Ascending aorta (tissue), 2 donors: ENCODE measurements at regions of chr6 and their contacts with region 1.

Region 1: GRCh38 chr6:11414176-11414963 is 123.2 kb upstream of the TMEM170B start:
- DNase-seq: no peak
- H3K4me3 ChIP-seq: no peak overlapping the region
- H3K27ac ChIP-seq: peak overlapping the region; percentile 85 to 93
- H3K4me1 ChIP-seq: peaks cover 7 to 20% of the 10 kb centered on the region in 2 donors
- H3K27me3 ChIP-seq: no peaks in the 10 kb centered on the region
- CTCF ChIP-seq: no peak

Region 2: DNA sequence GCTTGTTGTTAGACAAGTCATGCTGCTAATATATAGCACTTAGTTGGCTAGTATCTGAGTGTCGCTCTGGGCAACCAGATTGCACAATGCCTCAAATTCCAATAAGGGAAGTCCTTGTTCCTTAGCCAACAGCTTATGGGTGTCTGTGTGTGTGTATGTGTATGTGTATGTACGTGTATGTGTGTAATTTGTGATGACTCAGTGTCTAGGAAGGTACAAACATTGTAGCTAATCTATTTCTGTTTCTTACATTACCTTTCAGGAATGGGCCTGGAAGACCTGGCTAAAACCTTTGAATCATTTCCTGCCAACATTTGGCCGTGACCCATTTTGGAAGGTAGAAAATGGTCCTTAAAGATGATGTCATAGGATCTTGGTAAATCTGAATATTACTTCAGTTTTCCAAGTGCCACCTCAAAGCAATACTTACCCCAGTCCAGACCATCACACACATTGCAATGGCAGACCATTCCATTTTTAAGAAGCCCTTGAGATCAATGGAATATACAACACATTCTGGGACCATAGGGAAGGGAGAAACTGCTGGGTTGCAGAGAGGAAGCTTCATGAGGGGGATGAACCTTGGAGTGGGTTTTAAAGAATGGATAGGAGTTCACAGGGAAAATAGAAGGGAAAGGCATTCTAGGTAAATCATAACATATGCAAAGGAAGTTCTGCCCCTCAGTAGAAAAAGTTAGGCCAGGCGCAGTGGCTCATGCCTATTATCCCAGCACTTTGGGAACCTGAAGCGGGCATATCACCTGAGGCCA is 207.0 kb before region 1 on chr6:
- intact Hi-C with region 1: loop called (anchors 5 kb)
- DNase-seq: peak; percentile 67 to 94
- H3K4me3 ChIP-seq: peak overlapping the region; percentile 11 to 25
- H3K27ac ChIP-seq: peak overlapping the region; percentile 91 to 94
- H3K4me1 ChIP-seq: peaks cover 43 to 89% of the 10 kb centered on the region in 2 donors
- H3K27me3 ChIP-seq: no peaks in the 10 kb centered on the region
- CTCF ChIP-seq: no peak

Region 3: GRCh38 chr6:11353921-11354389 is 60.4 kb before region 1 on chr6:
- intact Hi-C with region 1: loop called (anchors 5 kb)
- DNase-seq: peak; percentile 79 to 93
- H3K4me3 ChIP-seq: no peak overlapping the region
- H3K27ac ChIP-seq: peak overlapping the region; percentile 92 to 95
- H3K4me1 ChIP-seq: peaks cover 12 to 25% of the 10 kb centered on the region in 2 donors
- H3K27me3 ChIP-seq: no peaks in the 10 kb centered on the region
- CTCF ChIP-seq: no peak

Region 4: GRCh38 chr6:11366183-11366933 is 48.0 kb before region 1 on chr6:
- intact Hi-C with region 1: loop called (anchors 2 kb)
- DNase-seq: no peak
- H3K4me3 ChIP-seq: no peak overlapping the region
- H3K27ac ChIP-seq: peak overlapping the region; percentile 78 to 87
- H3K4me1 ChIP-seq: peaks cover 4 to 16% of the 10 kb centered on the region in 2 donors
- H3K27me3 ChIP-seq: no peaks in the 10 kb centered on the region
- CTCF ChIP-seq: no peak

Region 5: GRCh38 chr6:11434565-11435326 is 20.4 kb after region 1 on chr6:
- intact Hi-C with region 1: loop called (anchors 1 kb)
- DNase-seq: peak in 1 of 2 donors; percentile 91
- H3K4me3 ChIP-seq: no peak overlapping the region
- H3K27ac ChIP-seq: peak overlapping the region; percentile 83 to 92
- H3K4me1 ChIP-seq: peaks cover 12 to 58% of the 10 kb centered on the region in 2 donors
- H3K27me3 ChIP-seq: no peaks in the 10 kb centered on the region
- CTCF ChIP-seq: no peak